ENCODE measurements at regions of chrX and their contacts with region 1.

Region 1: GRCh38 chrX:66046612-66047235 is 6.8 kb upstream of the VSIG4 start:
- DNase-seq: peak; percentile 69
- H3K4me3 Mint-ChIP-seq: peak overlapping the region; percentile 74
- H3K27ac Mint-ChIP-seq: peak overlapping the region; percentile 99
- H3K4me1 Mint-ChIP-seq: peaks cover 33% of the 10 kb centered on the region
- H3K27me3 Mint-ChIP-seq: no peaks in the 10 kb centered on the region

Region 2: DNA sequence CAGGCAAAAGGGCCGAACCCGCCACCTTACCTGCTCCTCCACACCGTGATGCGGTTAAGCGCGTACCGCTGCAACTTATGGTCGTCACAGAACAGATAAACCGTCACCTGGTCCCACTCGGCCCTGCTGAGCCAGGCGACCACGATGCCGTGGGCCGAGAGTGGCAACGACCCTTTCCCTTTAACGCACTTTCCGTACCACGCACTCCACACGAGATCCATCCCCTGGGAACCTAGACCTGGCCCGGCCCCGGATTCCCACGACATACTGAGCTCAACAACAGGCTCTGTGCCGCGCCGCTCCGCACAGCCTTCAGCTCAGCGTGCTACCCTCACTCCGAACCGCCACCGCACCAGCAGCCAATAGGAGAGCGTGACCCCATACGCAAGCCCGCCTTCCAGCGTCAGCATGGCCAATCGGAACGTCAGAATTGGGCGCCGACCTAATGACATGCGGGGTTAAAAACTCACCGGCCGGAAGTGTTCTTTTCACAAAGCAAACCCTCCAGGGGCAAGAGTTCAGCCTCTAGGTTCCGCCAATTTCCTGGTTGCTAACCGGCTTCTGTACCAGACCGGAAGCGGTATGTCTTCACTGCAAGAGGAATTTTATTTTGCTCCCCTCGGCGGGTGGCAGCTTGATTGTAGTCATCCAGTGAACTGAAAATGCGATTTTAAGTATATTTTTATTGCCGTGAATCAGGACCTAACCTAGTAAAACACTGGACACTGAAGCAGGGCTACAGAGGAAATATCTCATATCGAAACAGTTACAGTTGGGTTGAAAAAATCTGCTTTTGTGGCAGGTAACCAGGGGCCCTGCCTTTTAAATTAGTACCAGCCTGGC is 512.1 kb before region 1 on chrX and contains the start of gene LAS1L:
- intact Hi-C with region 1: loop called (anchors 1 kb)
- DNase-seq: peak; percentile 96
- H3K4me3 Mint-ChIP-seq: peak within 1 kb of the TSS; percentile 99
- H3K27ac Mint-ChIP-seq: peak within 1 kb of the TSS; percentile 100
- H3K4me1 Mint-ChIP-seq: peaks cover 11% of the 10 kb centered on the region
- H3K27me3 Mint-ChIP-seq: no peaks in the 10 kb centered on the region
- total RNA-seq, gene LAS1L: 61.0 and 64.0 TPM in 2 replicates

Region 3: DNA sequence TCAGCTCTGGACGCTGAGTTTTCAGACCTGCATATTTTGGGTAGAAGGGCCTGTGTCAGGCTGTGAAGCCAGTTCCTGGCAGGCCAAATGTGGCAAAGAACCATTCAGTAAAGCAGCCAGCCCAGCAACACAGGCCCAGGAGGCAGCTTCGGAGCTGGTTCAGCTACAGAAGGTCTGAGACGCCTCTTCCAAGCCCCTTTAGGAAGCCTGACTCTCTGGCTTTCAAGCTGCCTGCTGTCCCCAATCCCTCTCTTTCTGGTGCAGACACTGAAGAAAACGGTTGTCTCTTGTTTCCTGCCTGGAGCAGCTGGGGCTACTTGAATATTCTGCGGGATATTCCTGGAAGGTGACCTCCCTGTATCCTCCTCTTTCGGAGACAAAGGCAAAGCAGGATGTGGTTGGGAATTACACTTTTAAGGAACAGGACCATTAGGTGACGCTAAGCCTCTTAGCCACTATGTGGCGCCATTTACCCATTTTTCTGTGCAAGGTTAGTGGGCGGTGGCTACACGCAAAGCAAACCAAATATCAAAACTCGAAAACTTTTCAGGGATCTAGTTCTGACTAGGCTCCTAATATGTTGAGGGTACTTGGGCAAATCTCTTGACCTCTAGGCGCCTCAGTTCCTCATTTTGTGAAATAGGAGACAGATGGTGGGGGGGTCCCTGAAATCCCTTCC is 464.9 kb before region 1 on chrX:
- intact Hi-C with region 1: no loop called
- DNase-seq: peak; percentile 86
- H3K4me3 Mint-ChIP-seq: no peak overlapping the region
- H3K27ac Mint-ChIP-seq: no peak overlapping the region
- H3K4me1 Mint-ChIP-seq: peaks cover 8% of the 10 kb centered on the region
- H3K27me3 Mint-ChIP-seq: no peaks in the 10 kb centered on the region

Region 4: DNA sequence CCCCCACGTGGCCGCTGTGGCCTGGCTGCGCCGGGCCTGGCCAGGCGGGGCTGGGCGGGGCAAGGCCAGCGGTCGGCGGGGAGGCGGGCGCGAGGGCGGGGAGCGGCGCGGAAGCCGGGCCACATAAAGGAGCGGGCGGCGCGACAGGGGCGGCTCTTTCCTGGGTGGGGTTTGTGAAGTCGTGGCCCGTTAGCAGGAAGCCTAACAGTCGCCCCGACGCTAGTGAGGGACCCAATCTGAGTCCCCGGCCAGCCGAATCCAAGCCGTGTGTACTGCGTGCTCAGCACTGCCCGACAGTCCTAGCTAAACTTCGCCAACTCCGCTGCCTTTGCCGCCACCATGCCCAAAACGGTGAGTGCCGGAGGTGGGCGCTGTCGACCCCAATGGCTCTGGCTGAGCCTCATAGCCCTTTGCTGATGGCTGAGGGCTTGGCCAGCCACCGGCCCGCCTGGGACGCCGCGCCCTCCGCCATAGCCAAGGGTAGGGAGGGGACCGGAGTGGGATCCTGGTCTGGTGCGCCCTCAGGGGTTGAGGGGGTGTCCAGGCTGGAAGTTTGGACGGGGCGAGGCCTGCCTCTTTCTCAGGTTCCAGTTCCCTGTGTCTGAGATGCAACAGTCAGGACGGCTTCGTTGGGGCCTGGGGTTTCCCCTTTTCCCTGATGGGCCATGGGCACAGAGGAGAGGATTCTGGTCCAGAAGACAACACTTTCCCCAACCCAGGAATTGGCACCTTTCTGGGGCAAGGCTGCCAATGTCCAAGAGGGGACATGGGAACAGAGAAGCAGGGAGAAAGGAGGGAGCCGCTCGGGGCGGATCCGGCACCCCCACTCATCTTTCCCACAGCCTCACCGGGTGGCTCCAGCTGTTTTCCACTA is 379.0 kb before region 1 on chrX and contains the start of gene MSN:
- intact Hi-C with region 1: loop called (anchors 2 kb)
- DNase-seq: peak; percentile 93
- H3K4me3 Mint-ChIP-seq: peak within 1 kb of the TSS; percentile 97
- H3K27ac Mint-ChIP-seq: peak within 1 kb of the TSS; percentile 97
- H3K4me1 Mint-ChIP-seq: peaks cover 30% of the 10 kb centered on the region
- H3K27me3 Mint-ChIP-seq: no peaks in the 10 kb centered on the region
- total RNA-seq, gene MSN: 480 and 482 TPM in 2 replicates

Region 5: GRCh38 chrX:65750674-65751469 is 295.9 kb before region 1 on chrX:
- intact Hi-C with region 1: loop called (anchors 10 kb)
- DNase-seq: peak; percentile 79
- H3K4me3 Mint-ChIP-seq: peak overlapping the region; percentile 57
- H3K27ac Mint-ChIP-seq: peak overlapping the region; percentile 57
- H3K4me1 Mint-ChIP-seq: peaks cover 32% of the 10 kb centered on the region
- H3K27me3 Mint-ChIP-seq: no peaks in the 10 kb centered on the region

Region 6: GRCh38 chrX:65994519-65995506 is 51.9 kb before region 1 on chrX:
- intact Hi-C with region 1: loop called (anchors 2 kb)
- DNase-seq: no peak
- H3K4me3 Mint-ChIP-seq: no peak overlapping the region
- H3K27ac Mint-ChIP-seq: peak overlapping the region; percentile 68
- H3K4me1 Mint-ChIP-seq: peaks cover 17% of the 10 kb centered on the region
- H3K27me3 Mint-ChIP-seq: no peaks in the 10 kb centered on the region

Region 7: DNA sequence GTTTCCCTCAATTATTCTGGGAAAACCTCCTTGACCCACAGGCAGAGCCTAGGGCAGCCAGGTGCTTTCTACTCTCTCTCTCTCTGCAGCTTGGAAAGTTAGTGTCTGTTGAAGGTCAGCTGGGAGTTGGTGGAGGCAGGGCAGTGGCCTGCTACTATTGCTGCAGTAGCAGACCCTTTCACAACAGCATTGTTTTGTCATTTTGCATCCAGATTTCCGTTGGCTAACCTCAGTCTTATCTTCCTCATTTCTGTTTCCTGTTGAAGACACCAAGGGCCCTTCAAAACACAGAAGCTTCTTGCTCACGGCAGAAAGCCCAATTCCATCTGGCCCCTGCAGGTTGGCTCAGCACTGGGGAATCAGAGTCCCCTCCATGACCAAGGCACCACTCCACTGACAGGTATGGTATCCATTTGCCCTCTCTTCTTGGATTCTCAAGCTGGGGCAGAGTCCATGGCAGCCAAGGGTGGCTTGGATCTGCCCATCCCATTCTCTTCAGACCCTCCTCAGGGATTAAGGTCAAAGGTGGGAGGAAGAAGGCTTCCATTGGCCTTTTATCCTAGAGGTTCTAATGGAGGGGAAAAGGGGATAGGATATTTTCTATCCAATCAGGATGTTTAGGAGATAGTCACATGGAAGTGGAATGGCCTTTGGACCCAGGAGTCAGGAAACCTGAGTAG is 31.4 kb before region 1 on chrX:
- intact Hi-C with region 1: loop called (anchors 1 kb)
- DNase-seq: peak; percentile 78
- H3K4me3 Mint-ChIP-seq: peak overlapping the region; percentile 64
- H3K27ac Mint-ChIP-seq: peak overlapping the region; percentile 77
- H3K4me1 Mint-ChIP-seq: peaks cover 65% of the 10 kb centered on the region
- H3K27me3 Mint-ChIP-seq: no peaks in the 10 kb centered on the region

Region 8: DNA sequence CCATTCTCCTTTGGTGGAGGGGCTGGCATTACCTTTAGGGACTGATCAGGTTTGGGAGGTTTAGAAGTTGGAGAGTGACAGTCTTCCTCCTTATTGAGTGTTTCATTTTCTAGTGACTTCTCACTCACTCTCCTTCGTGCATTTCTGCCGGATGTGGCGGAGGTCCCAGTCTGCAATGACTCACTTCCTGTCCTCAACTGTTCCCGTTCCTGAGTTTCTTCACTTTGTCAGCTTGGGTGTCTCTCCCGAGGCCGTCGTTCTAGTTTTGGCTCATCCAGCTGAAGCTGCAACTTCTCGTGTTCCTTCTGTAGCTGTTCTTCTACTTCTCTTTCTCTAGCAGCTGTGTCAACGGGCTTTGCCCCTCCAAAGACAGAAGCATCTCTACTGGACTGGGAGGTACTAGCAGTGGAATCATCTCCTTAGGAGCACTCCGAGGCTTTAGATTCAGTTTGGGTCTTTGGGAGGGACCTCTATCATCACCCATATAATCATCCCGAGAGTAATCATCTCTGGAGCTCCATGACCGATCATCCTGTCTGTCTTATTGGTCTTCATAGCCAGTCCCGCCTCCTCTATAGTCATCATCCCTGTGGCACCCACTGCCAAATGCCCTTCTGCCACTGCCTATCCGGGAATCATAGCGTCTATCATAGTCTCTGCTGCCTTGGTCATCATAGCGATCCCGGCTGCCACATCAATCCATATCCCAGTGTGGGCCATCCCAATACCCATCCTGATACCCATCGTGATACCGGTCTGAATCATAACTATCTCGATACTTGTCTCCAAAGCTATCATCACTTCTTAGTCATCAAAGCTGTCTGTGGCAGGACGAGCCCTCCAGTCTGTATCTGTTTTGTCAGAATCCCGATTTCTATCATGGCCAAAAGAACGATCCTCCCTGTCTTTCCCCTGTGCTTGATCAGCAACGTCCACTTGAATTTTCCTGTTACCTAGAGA is 28.5 kb after region 1 on chrX:
- intact Hi-C with region 1: loop called (anchors 2 kb)
- DNase-seq: peak; percentile 80
- H3K4me3 Mint-ChIP-seq: peak overlapping the region; percentile 77
- H3K27ac Mint-ChIP-seq: peak overlapping the region; percentile 90
- H3K4me1 Mint-ChIP-seq: peaks cover 20% of the 10 kb centered on the region
- H3K27me3 Mint-ChIP-seq: no peaks in the 10 kb centered on the region